Psoas muscle (tissue), 8 donors: ENCODE measurements at regions of chr6 and their contacts with region 1.

Region 1: GRCh38 chr6:41027799-41028628 is 11.0 kb downstream of the UNC5CL start:
- DNase-seq: peak; percentile 89 to 94
- ATAC-seq: peak; percentile 96 to 98 (median 96)
- H3K4me3 ChIP-seq: peak overlapping the region; percentile 68
- H3K27ac ChIP-seq: peak overlapping the region; percentile 85
- H3K4me1 ChIP-seq: peaks cover 4% of the 10 kb centered on the region
- H3K27me3 ChIP-seq: no peaks in the 10 kb centered on the region
- CTCF ChIP-seq: peak; percentile 100

Region 2: GRCh38 chr6:40328405-40328987 is 699.5 kb before region 1 on chr6:
- intact Hi-C with region 1: loop called in 1 of 2 experiments (anchors 10 kb)
- DNase-seq: no peak
- ATAC-seq: peak; percentile 44 to 74 (median 71)
- H3K4me3 ChIP-seq: no peak overlapping the region
- H3K27ac ChIP-seq: no peak overlapping the region
- H3K4me1 ChIP-seq: peaks cover 9% of the 10 kb centered on the region
- H3K27me3 ChIP-seq: no peaks in the 10 kb centered on the region
- CTCF ChIP-seq: peak; percentile 61

Region 3: GRCh38 chr6:40563111-40563510 is 464.9 kb before region 1 on chr6:
- intact Hi-C with region 1: no loop called
- DNase-seq: no peak
- ATAC-seq: no peak
- H3K4me3 ChIP-seq: no peak overlapping the region
- H3K27ac ChIP-seq: no peak overlapping the region
- H3K4me1 ChIP-seq: no peaks in the 10 kb centered on the region
- H3K27me3 ChIP-seq: no peaks in the 10 kb centered on the region
- CTCF ChIP-seq: no peak

Region 4: GRCh38 chr6:40894962-40895799 is 132.8 kb before region 1 on chr6:
- intact Hi-C with region 1: loop called (anchors 1 to 2 kb)
- DNase-seq: peak; percentile 42 to 73
- ATAC-seq: peak; percentile 85 to 97 (median 90)
- H3K4me3 ChIP-seq: no peak overlapping the region
- H3K27ac ChIP-seq: no peak overlapping the region
- H3K4me1 ChIP-seq: peaks cover 13% of the 10 kb centered on the region
- H3K27me3 ChIP-seq: no peaks in the 10 kb centered on the region
- CTCF ChIP-seq: peak; percentile 59

Region 5: DNA sequence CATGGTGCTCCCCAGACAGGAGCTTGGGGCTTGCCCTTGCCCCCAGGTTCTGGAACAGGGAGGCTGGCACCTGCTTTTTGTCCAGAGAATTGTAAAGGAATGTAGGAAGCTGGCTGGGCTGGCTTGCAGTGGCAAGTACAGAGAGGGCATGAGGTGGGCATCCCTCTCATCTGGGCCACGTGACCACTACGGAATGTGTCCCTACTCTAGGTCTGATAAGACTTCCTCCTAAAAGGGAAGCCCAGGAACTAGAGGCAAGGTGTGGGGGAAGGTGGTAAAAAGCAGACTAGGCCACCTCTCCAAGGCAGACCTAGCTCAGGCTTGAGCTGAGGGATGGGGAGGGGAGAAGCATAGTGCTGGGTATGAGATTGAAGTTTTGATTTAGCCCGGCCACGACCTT is 27.8 kb before region 1 on chr6:
- intact Hi-C with region 1: loop called in 1 of 2 experiments (anchors 2 kb)
- DNase-seq: no peak
- ATAC-seq: no peak
- H3K4me3 ChIP-seq: no peak overlapping the region
- H3K27ac ChIP-seq: no peak overlapping the region
- H3K4me1 ChIP-seq: peaks cover 33% of the 10 kb centered on the region
- H3K27me3 ChIP-seq: no peaks in the 10 kb centered on the region
- CTCF ChIP-seq: no peak

Region 6: DNA sequence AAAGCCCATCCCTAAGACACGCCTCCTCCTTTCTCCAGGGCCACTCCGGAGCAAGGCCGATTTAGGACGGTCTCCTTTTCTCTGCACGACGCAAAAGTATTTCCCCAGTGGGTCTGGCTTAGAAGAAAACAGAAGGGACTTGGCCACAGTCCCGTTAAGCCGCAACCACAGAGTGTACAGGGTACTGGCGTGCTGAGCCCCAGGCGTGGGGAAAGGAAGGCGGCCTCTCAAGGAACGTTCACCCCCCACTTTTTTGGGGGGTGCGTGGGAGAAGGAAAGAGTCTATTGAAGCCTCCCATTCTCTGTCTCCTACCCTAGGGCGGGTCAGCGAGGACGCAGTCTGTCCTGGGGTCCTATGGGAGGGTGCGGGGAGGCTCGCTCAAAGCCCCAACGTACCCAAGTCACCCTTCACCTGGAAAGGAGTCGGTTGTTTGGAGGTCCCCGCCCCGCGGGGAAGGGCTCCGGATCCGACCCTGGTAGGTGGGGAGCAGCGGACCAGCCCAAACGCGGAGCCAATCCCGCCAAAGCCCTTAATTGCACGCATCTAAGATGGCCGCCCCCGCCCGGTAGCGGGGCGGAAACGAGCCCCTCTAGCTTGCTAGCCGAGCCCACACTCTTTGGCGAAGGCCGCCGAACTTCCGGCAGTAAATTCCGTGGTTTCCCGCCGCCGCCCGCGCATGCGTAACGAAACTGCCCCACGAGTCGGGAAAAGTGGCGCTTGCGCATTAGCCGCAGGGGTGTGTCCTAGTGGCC is 44.1 kb after region 1 on chr6 and contains the start of gene OARD1:
- intact Hi-C with region 1: loop called (anchors 2 to 5 kb)
- DNase-seq: peak; percentile 79 to 100
- ATAC-seq: peak; percentile 72 to 78 (median 76)
- H3K4me3 ChIP-seq: peak within 1 kb of the TSS; percentile 90
- H3K27ac ChIP-seq: peak within 1 kb of the TSS; percentile 100
- H3K4me1 ChIP-seq: peaks cover 30% of the 10 kb centered on the region
- H3K27me3 ChIP-seq: no peaks in the 10 kb centered on the region
- CTCF ChIP-seq: no peak
- total RNA-seq, gene OARD1: 13.5 to 23.4 (median 16.6) TPM